ENCODE measurements at regions of chr12 and their contacts with region 1.

Region 1: GRCh38 chr12:74227846-74228545 is 309.6 kb upstream of the ATXN7L3B start:
- DNase-seq: no peak
- ATAC-seq: no peak
- H3K4me3 ChIP-seq: no peak overlapping the region
- H3K27ac ChIP-seq: no peak overlapping the region
- H3K4me1 ChIP-seq: no peaks in the 10 kb centered on the region
- H3K27me3 ChIP-seq: no peaks in the 10 kb centered on the region
- CTCF ChIP-seq: no peak
- POLR2A ChIP-seq: no peak

Region 2: DNA sequence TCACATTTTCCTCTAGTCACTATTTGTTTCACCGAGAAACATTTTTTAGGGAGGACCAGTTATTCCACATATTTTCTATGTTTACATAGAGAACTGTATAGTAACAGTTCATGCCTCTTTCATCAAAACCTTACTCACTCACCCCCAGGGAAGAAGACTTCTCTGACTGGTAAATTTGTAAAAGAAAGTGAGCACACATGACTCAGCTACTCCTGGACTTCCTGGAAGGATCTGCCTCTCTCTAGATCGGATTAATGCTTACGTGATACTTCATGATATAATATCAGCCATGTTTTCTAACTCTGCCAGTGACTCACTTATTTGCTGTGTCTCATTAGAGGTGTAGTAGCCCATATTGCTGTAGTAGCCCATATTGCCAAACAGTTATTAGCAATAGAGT is 184.7 kb before region 1 on chr12:
- intact Hi-C with region 1: no loop called
- DNase-seq: no peak
- ATAC-seq: no peak
- H3K4me3 ChIP-seq: no peak overlapping the region
- H3K27ac ChIP-seq: no peak overlapping the region
- H3K4me1 ChIP-seq: no peaks in the 10 kb centered on the region
- H3K27me3 ChIP-seq: no peaks in the 10 kb centered on the region
- CTCF ChIP-seq: no peak
- POLR2A ChIP-seq: no peak

Region 3: DNA sequence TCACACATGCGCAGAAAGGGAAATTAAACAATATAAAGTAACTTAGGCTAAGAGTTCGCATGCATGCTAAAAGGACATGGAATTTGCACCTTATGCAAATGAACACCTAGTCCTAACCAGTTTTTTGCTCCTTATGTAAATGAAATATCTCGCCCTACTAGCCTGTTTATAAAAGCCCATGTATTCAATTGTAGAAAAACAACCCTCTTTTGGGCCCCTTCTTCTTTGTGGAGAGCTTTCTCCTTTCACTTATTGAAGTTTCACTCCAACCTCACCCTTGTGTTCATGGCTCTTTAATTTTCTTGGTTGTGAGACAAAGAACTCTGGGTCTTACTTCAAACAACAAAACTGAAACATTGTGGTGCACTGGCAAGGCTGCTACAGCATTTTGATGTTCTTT is 23.8 kb before region 1 on chr12:
- intact Hi-C with region 1: loop called in 1 of 10 experiments (anchors 2 kb)
- DNase-seq: no peak
- ATAC-seq: no peak
- H3K4me3 ChIP-seq: no peak overlapping the region
- H3K27ac ChIP-seq: no peak overlapping the region
- H3K4me1 ChIP-seq: no peaks in the 10 kb centered on the region
- H3K27me3 ChIP-seq: no peaks in the 10 kb centered on the region
- CTCF ChIP-seq: no peak
- POLR2A ChIP-seq: no peak

Region 4: DNA sequence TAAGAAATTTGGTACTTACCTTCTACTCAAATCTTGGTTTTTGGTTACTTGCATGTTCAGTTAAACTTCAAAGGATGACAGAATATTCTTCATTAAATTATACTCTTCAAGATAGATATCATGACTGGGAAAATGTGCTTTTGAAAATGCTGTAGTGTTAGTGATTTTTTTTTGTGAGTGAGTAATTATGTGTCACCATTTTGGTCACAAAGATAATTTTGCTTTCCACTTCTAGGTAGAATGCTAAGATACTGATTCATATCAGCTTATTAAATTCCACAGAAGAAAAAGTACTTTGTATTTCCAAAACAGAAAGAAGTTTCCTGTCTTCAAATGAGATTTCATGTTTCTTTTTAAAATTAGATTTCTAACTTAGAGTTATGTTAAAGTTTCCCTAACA is 370.8 kb after region 1 on chr12:
- intact Hi-C with region 1: no loop called
- DNase-seq: no peak
- ATAC-seq: no peak
- H3K4me3 ChIP-seq: no peak overlapping the region
- H3K27ac ChIP-seq: no peak overlapping the region
- H3K4me1 ChIP-seq: no peaks in the 10 kb centered on the region
- H3K27me3 ChIP-seq: no peaks in the 10 kb centered on the region
- CTCF ChIP-seq: no peak
- POLR2A ChIP-seq: no peak

Measured in heart left ventricle (tissue), 16 donors.